ENCODE measurements at regions of chr1 and their contacts with region 1.

Region 1: DNA sequence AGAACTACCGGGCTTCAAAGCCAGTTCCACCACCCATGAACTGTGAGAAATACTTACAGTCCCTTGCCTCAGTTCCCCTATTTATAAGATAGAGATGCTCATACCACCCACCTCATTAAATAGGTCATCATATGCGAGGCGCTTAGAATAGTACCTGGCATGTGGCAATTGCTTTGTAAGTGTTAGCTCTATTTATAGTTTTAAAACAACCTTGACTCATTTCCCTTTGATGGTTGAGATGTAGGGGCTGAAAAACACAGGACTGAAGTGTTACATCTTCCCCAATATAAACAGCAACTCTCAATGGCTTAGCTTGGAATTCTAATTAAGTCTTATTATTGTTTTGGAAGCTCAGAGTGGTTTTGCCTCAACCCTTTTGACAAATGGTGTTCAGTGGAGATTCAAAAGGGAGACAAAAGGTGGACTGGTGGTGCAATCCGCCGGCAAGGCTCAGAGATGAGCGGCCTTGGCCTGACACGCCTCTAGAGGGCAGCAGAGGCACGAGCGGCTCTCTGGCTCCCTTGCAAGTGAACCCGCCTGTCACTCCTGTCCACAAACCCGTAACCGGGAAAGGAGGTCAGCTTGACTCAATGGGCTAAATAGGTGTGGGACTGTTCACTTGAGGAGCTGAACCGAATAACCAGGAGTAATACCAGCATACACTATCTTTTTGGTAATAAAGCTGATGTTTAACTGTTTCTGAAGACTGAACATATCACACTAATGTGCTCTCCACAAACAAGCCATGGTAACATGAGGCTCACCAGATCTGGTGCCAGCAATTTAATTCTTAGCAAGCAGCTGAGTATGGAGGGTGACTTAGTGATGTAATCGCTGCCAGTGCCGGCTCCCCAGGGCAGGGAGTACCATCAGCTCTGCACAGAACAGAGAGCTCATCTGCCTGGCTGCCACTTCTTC is 19.5 kb upstream of the SMYD2 start:
- H3K4me3 ChIP-seq: no peak overlapping the region
- H3K27ac ChIP-seq: no peak overlapping the region
- H3K4me1 ChIP-seq: no peaks in the 10 kb centered on the region
- CTCF ChIP-seq: peak; percentile 88

Region 2: GRCh38 chr1:214213136-214213535 is 48.3 kb before region 1 on chr1:
- CTCF ChIA-PET with region 1: interaction called, 44 read pairs
- POLR2A ChIA-PET with region 1: no interaction called
- H3K4me3 ChIP-seq: no peak overlapping the region
- H3K27ac ChIP-seq: no peak overlapping the region
- H3K4me1 ChIP-seq: no peaks in the 10 kb centered on the region
- CTCF ChIP-seq: no peak

Region 3: DNA sequence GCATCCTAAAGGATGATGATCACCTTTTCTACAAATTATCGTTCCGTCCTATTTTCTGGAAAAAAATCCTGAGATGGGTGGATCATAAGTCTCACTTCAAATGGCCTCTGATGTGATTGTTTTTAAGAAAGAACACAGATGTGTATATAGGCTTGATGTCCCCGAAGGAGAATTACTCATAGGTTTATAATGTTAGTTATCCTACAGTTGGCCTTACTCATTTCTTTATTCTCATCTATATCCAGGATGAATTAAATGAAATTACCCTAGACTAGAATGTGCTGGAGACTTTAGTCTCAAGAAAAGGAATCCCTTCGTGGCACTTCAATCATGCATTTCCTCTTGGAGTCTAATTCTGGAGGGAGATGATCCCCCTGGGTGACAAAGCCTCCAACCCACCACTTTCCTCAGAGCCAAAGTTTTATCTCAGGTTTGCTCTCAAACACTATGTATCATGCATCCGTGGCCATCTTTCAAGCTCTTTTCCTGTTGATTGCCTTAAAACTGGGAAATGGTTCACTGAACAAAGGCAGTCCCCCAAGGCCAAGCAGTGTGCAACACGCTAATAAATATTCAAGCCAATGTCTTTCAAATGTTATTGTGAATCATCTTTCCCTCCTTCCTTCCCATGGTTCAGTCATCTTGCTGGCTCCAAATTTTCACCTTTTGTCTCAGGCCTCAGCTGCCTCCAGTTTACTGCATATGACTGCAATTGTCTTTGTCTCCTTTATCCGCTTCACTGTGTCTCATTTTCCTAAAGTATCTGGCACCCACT is 13.0 kb before region 1 on chr1:
- CTCF ChIA-PET with region 1: interaction called, 54 read pairs
- POLR2A ChIA-PET with region 1: no interaction called
- H3K4me3 ChIP-seq: no peak overlapping the region
- H3K27ac ChIP-seq: no peak overlapping the region
- H3K4me1 ChIP-seq: no peaks in the 10 kb centered on the region
- CTCF ChIP-seq: no peak

Region 4: DNA sequence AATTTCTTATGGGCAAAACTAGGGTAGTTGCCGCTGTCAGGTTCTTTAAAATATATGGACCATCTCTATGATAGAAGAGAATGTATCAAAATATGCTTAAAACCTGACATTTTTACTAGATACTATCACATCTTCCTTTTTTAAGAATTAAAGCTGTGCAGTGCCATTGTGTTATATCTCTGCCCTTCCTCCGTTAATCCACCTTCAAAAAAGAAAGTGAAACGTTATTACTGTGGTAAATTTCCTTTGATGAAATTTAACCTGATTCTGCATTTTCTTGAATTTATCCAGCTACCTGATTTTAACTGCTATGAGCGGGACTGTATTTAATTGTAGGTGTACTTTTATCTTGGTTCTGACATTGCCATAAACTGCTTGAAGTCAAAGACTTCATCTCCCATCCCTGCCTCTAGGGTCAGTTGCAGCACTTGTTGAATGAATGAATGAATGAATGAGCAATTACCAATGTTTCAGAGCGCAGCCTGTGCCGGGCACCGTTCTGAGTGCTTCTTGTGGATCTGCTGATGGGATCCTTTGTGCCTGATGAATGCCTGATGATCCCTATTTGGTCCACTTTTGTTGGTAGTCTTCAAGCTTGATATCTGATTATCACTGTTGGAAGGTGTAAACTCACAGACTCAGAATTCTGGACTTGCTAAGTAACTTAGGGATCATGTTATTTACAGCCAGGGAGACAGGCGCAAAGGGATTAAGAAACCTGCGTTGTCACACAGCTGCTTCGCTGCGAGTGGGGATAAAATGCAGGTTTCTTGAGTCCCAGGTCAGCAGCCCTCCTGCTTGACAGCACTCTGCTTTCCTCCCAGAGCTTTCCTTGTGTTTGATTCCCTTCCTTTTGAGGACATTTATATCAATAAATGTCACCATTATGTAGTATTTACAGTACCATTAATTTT is 49.6 kb after region 1 on chr1:
- CTCF ChIA-PET with region 1: interaction called, 27 read pairs
- POLR2A ChIA-PET with region 1: no interaction called
- H3K4me3 ChIP-seq: no peak overlapping the region
- H3K27ac ChIP-seq: no peak overlapping the region
- H3K4me1 ChIP-seq: no peaks in the 10 kb centered on the region
- CTCF ChIP-seq: no peak

Region 5: GRCh38 chr1:214328770-214329469 is 67.5 kb after region 1 on chr1:
- CTCF ChIA-PET with region 1: interaction called, 428 read pairs
- POLR2A ChIA-PET with region 1: interaction called, 3 read pairs
- H3K4me3 ChIP-seq: no peak overlapping the region
- H3K27ac ChIP-seq: no peak overlapping the region
- H3K4me1 ChIP-seq: no peaks in the 10 kb centered on the region
- CTCF ChIP-seq: peak; percentile 90

Region 6: GRCh38 chr1:214397497-214397896 is 136.0 kb after region 1 on chr1:
- CTCF ChIA-PET with region 1: no interaction called
- POLR2A ChIA-PET with region 1: no interaction called
- H3K4me3 ChIP-seq: no peak overlapping the region
- H3K27ac ChIP-seq: no peak overlapping the region
- H3K4me1 ChIP-seq: peaks cover 9% of the 10 kb centered on the region
- CTCF ChIP-seq: no peak

Region 7: DNA sequence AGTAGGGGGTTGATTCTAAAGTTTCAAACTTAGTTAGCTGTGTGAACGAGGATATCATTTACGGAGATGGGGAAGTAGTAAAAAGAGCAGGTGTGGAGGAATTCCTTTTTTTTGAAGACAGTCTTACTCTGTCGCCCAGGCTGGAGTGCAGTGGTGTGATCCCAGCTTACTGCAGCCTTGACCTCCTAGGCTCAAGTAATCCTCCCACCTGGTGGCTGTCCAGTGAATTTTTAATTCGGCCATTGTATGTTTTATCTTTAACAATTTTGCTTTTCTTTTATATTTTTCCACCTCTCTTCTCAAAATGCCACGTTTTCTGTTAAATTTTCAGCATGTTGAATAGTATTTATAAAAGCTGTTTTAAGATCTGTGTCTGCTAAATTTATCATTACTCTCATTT is 329.2 kb after region 1 on chr1:
- CTCF ChIA-PET with region 1: interaction called, 21 read pairs
- POLR2A ChIA-PET with region 1: no interaction called
- H3K4me3 ChIP-seq: no peak overlapping the region
- H3K27ac ChIP-seq: no peak overlapping the region
- H3K4me1 ChIP-seq: no peaks in the 10 kb centered on the region
- CTCF ChIP-seq: no peak

Measured in HEK293 (cell line).